ENCODE measurements at regions of chr22 and their contacts with region 1.

Region 1: GRCh38 chr22:19696504-19697276 is 17.6 kb upstream of the SEPTIN5 start:
- DNase-seq: no peak
- H3K4me3 ChIP-seq: no peak overlapping the region
- H3K27ac ChIP-seq: no peak overlapping the region
- H3K4me1 ChIP-seq: no peaks in the 10 kb centered on the region
- H3K27me3 ChIP-seq: no peaks in the 10 kb centered on the region
- CTCF ChIP-seq: no peak
- POLR2A ChIP-seq: no peak

Region 2: GRCh38 chr22:19742160-19743066 is 45.7 kb after region 1 on chr22:
- intact Hi-C with region 1: loop called (anchors 2 kb)
- DNase-seq: no peak
- H3K4me3 ChIP-seq: no peak overlapping the region
- H3K27ac ChIP-seq: no peak overlapping the region
- H3K4me1 ChIP-seq: no peaks in the 10 kb centered on the region
- H3K27me3 ChIP-seq: no peaks in the 10 kb centered on the region
- CTCF ChIP-seq: no peak
- POLR2A ChIP-seq: no peak

Region 3: DNA sequence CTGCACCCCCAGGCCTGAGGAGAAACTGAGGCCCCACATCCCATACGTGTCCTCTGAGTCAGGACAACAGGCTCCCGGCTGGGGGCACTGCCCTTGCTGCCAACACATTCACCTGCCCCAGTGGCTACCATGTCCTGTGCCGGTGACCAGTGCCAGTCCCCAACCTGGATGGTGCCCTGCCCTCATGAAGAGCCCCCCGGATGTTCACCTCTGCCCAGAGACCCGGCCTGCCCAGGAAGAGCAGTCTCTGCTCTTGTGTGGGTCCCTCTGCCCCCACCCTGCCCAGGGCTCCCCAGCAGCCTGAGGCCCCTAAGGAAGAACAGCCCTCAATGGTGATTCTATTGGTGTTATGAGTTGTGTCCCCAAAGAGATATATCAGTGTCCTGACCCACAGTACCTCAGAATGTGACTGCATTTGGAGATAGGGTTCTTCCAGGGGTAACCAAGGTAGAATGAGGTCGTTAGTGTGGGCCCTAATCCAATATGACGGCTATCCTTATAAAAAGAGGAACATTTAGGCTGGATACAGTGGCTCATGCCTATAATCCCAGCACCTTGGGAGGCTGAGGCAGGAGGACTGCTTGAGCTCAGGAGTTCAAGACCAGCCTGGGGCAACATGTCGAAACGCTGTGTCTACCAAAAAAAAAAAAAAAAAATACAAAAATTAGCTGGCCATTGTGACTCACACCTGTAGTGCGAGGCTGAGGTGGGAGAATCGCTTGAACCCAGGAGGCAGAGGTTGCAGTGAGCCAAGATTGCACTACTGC is 370.1 kb after region 1 on chr22:
- intact Hi-C with region 1: no loop called
- DNase-seq: no peak
- H3K4me3 ChIP-seq: no peak overlapping the region
- H3K27ac ChIP-seq: no peak overlapping the region
- H3K4me1 ChIP-seq: no peaks in the 10 kb centered on the region
- H3K27me3 ChIP-seq: no peaks in the 10 kb centered on the region
- CTCF ChIP-seq: no peak
- POLR2A ChIP-seq: no peak

Measured in breast epithelium (tissue), 4 donors.